ENCODE measurements at regions of chr10 and their contacts with region 1.

Region 1: DNA sequence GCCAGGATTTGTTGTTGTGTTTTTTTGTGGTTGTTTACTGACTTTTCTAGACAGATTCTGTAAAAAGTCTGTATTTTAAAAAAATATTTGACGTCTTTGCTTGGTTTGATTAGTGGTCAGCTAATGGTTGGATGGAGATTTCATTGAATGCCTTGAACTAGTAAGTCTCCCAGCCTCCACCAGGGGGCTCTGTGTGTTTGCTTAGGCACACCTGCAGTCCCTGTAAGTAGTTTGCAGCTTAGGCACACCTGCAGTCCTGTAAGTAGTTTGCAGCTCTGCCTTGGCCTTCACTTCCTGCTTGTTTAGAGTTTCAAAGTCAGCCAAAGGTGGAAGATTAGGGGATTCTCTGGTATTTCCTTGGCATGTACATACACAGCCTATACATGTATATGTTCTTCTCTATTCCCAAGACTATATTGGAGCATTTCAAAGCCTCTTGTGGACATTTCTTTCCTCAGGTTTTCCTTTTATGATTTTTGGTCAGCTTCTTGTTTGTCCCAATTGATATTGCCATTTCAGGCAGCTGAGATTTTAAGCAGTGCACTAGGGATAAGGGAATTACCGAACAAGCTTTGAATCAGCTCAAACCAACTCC is 101.6 kb downstream of the CCSER2 start:
- DNase-seq: peak in 1 of 2 donors; percentile 61
- ATAC-seq: peak in 1 of 2 donors; percentile 71
- H3K4me3 ChIP-seq: no peak overlapping the region
- H3K27ac ChIP-seq: no peak overlapping the region
- H3K4me1 ChIP-seq: peaks cover 55 to 68% of the 10 kb centered on the region in 2 donors
- H3K27me3 ChIP-seq: no peaks in the 10 kb centered on the region
- CTCF ChIP-seq: peak; percentile 33 to 74 (median 60)
- POLR2A ChIP-seq: no peak

Region 2: DNA sequence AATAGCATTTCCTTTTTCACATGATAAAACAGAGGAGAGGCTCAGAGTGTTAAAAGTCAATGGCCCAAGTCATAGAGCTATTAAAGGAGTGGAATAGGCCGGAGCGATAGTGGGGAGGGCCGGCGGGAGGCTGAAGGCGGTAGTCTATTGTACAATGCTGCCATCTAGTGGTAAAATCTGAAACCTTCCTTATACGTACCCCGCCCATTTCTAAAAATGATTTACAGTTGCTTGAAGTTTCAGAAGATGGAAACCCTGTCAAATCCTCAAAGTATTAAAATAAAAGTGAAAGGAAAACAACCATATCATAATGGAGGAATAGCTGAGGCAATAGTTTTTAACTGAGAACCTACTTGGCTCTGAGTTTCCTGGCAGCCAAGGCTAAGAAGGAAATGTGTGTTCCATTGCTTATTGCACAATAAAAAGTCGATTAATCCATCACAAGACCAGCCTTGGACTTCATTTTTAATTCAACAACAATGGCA is 107.5 kb after region 1 on chr10:
- in situ Hi-C with region 1: no loop called
- intact Hi-C with region 1: loop called (anchors 1 kb)
- DNase-seq: peak in 1 of 2 donors; percentile 32
- ATAC-seq: peak; percentile 72 to 89
- H3K4me3 ChIP-seq: no peak overlapping the region
- H3K27ac ChIP-seq: no peak overlapping the region
- H3K4me1 ChIP-seq: peaks cover 0 to 4% of the 10 kb centered on the region in 2 donors
- H3K27me3 ChIP-seq: peaks cover 18 to 22% (median 22%) of the 10 kb centered on the region in 3 donors
- CTCF ChIP-seq: peak; percentile 85 to 93 (median 89)
- POLR2A ChIP-seq: no peak